ENCODE measurements at regions of chr17 and their contacts with region 1.

Region 1: GRCh38 chr17:42819944-42820535 is 4.0 kb downstream of the BECN1 start:
- DNase-seq: peak; percentile 65
- H3K4me3 ChIP-seq: no peak overlapping the region
- H3K27ac ChIP-seq: no peak overlapping the region
- H3K4me1 ChIP-seq: peaks cover 6% of the 10 kb centered on the region
- H3K27me3 ChIP-seq: no peaks in the 10 kb centered on the region
- CTCF ChIP-seq: peak; percentile 66

Region 2: GRCh38 chr17:42720996-42721583 is 99.0 kb before region 1 on chr17:
- CTCF ChIA-PET with region 1: no interaction called
- POLR2A ChIA-PET with region 1: no interaction called
- intact Hi-C with region 1: loop called (anchors 10 kb)
- DNase-seq: peak; percentile 57
- H3K4me3 ChIP-seq: no peak overlapping the region
- H3K27ac ChIP-seq: no peak overlapping the region
- H3K4me1 ChIP-seq: no peaks in the 10 kb centered on the region
- H3K27me3 ChIP-seq: no peaks in the 10 kb centered on the region
- CTCF ChIP-seq: peak; percentile 61

Region 3: DNA sequence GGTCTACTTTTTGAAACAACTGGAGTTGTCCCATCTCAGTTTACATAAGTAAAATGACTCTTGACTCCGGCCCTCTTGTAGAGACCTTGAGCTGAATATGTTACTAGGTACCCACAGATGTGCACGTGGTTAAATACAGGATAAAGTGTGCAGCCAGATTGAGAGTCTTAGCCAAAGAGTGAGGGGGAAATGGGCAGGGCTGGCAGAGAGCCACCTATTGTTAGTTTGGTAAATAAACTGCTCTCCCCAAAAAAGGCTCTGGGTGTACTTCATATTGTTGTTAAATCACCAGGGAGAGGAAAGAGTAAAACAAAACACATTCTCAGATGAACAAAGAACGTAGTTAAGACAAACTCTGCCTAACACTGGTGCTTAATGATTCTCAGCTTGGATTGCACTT is 100.9 kb after region 1 on chr17:
- CTCF ChIA-PET with region 1: no interaction called
- POLR2A ChIA-PET with region 1: no interaction called
- intact Hi-C with region 1: no loop called
- DNase-seq: no peak
- H3K4me3 ChIP-seq: no peak overlapping the region
- H3K27ac ChIP-seq: no peak overlapping the region
- H3K4me1 ChIP-seq: no peaks in the 10 kb centered on the region
- H3K27me3 ChIP-seq: no peaks in the 10 kb centered on the region
- CTCF ChIP-seq: no peak

Region 4: GRCh38 chr17:42937712-42938596 is 117.9 kb after region 1 on chr17:
- CTCF ChIA-PET with region 1: interaction called, 12 read pairs
- POLR2A ChIA-PET with region 1: no interaction called
- intact Hi-C with region 1: no loop called
- DNase-seq: peak; percentile 58
- H3K4me3 ChIP-seq: no peak overlapping the region
- H3K27ac ChIP-seq: no peak overlapping the region
- H3K4me1 ChIP-seq: no peaks in the 10 kb centered on the region
- H3K27me3 ChIP-seq: no peaks in the 10 kb centered on the region
- CTCF ChIP-seq: peak; percentile 56

Measured in A673 (cell line).